ENCODE measurements at regions of chr11 and their contacts with region 1.

Region 1: GRCh38 chr11:10514210-10514609 is 26.8 kb downstream of the RNF141 start:
- DNase-seq: no peak
- H3K4me3 ChIP-seq: no peak overlapping the region
- H3K27ac ChIP-seq: peak overlapping the region; percentile 10
- H3K4me1 ChIP-seq: peaks cover 20% of the 10 kb centered on the region
- H3K27me3 ChIP-seq: no peaks in the 10 kb centered on the region
- CTCF ChIP-seq: no peak

Region 2: DNA sequence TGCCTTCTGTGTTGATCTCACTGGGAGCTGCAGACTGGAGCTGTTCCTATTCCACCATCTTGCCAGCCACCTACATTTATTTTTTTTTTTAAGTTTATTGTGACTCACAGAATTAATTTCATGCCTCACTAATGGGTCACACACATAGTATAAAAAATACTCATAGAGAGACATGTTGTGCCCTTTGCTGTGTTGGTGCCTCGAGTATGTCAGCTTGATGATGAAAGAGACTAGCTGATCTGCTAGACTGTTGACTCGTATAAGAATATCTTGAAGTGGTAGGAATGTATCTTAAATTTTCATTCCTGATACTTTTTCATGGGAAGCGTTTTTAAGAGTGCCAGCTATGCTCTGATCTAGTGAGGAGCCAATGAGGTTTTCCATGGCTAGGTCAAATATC is 87.7 kb before region 1 on chr11:
- dilution Hi-C with region 1: no loop called
- DNase-seq: no peak
- H3K4me3 ChIP-seq: no peak overlapping the region
- H3K27ac ChIP-seq: no peak overlapping the region
- H3K4me1 ChIP-seq: peaks cover 2% of the 10 kb centered on the region
- H3K27me3 ChIP-seq: no peaks in the 10 kb centered on the region
- CTCF ChIP-seq: no peak

Region 3: GRCh38 chr11:10564696-10565318 is 50.6 kb after region 1 on chr11:
- dilution Hi-C with region 1: no loop called
- DNase-seq: no peak
- H3K4me3 ChIP-seq: no peak overlapping the region
- H3K27ac ChIP-seq: no peak overlapping the region
- H3K4me1 ChIP-seq: peaks cover 2% of the 10 kb centered on the region
- H3K27me3 ChIP-seq: no peaks in the 10 kb centered on the region
- CTCF ChIP-seq: peak; percentile 13 to 45 (median 26)

Region 4: DNA sequence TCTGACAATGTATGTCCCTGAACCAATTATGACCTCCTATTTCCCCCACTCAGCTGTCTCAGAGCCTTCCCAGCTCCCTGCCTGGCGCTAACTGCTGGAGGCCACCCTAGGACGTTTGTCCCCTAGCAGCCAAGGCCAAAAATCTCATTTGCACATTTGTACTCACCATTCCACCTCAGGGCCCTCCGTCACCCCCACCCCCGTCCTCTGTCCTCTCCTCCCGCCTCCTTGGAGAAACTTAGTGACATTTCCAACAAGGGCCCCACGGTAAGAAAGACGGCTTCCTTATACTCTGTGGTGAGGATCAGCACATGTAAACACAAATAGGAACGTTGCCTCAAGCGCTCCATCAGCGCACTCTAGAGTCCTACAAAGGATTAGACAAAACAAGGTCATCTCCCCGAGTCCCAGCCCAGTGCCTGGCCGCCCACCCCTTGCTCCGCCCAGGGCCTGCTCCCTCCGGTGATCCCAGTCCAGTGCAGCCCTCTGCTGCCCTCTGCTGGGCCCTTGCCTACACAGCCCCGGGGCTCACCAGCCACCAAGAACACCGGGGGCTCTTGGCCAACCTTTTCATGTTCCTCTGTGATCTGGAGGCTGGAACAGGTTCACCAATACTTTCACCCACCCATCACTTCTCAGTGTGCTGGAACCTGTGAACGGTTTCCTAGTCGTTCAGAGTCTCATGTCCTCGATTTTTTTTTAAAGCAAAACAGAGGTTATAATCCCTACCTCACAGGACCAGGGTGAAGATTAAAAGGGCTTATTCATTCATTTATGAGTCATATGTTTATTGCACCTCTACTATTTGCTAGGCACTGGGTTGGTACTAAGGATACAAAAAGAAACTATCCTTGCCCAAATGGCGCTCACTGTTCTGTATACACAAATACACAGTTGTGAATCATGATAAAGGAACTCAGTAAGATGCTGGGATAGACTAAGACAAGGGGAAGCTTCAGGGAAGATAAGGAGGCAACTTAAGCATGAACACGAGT is 221.6 kb after region 1 on chr11:
- dilution Hi-C with region 1: loop called (anchors 25 kb)
- DNase-seq: peak; percentile 72
- H3K4me3 ChIP-seq: peak overlapping the region in 2 of 3 experiments; percentile 59 to 73
- H3K27ac ChIP-seq: peak overlapping the region; percentile 90
- H3K4me1 ChIP-seq: peaks cover 14% of the 10 kb centered on the region
- H3K27me3 ChIP-seq: no peaks in the 10 kb centered on the region
- CTCF ChIP-seq: peak; percentile 88 to 97 (median 94)

Measured in keratinocyte (primary cell).